Common myeloid progenitor, CD34-positive (primary cell): ENCODE measurements at regions of chr1 and their contacts with region 1.

Region 1: DNA sequence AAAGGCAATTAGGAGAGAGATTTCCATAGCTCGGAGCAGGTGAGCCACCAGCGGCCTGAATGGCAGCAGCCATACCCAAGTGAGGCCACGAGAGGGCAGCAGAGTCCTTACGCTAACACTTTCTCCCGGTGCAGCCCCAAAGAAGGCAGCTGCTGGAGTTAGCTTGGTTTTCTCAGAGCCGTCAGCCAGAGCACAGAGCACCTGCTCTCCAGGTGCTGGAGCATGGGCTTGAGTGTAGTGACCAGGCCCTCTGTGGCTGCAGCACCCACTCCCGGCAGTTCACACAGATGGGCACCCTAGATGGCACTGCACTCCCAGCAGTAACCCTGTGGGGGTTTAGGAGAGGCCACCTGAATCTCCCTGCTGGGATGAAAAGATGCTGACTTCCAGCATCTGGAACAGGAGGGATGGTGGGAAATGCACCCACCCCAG is 45.8 kb downstream of the TMCC2 start:
- DNase-seq: peak; percentile 71 to 86 (median 81)
- H3K4me3 ChIP-seq: no peak overlapping the region
- H3K27ac ChIP-seq: no peak overlapping the region
- H3K4me1 ChIP-seq: peaks cover 0 to 6% (median under 1%) of the 10 kb centered on the region in 4 experiments
- H3K27me3 ChIP-seq: peaks cover 0 to 11% (median 0%) of the 10 kb centered on the region in 5 experiments

Region 2: DNA sequence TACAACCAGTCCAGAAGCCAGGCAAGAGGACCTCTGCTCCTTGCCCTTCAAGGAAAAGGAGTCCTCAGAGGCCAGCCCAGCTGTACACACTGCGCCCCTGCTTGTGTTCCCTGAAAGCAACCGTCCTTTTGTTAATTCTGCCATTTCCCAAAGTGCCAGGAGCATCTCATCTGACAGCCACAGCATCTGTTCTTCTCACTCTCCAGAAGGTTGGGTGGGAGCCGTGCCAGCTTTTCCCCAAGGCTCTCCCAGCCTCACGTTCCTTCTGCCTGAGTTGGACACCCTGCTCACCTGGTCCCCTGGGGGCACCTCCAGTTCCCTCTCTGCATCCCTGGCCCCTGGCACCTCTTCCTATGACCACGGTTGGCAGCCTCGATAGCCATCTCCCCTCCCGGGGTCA is 241.1 kb before region 1 on chr1:
- CTCF ChIA-PET with region 1: no interaction called
- POLR2A ChIA-PET with region 1: no interaction called
- DNase-seq: no peak
- H3K4me3 ChIP-seq: no peak overlapping the region
- H3K27ac ChIP-seq: no peak overlapping the region
- H3K4me1 ChIP-seq: no peaks in the 10 kb centered on the region
- H3K27me3 ChIP-seq: peaks cover 0 to 11% (median 0%) of the 10 kb centered on the region in 5 experiments

Region 3: GRCh38 chr1:205237526-205238484 is 35.8 kb before region 1 on chr1:
- CTCF ChIA-PET with region 1: no interaction called
- POLR2A ChIA-PET with region 1: no interaction called
- DNase-seq: peak; percentile 56 to 86 (median 82)
- H3K4me3 ChIP-seq: peak overlapping the region in 4 of 7 experiments; percentile 2 to 55 (median 28)
- H3K27ac ChIP-seq: peak overlapping the region; percentile 10 to 63
- H3K4me1 ChIP-seq: peaks cover 13 to 37% (median 32%) of the 10 kb centered on the region in 4 experiments
- H3K27me3 ChIP-seq: no peaks in the 10 kb centered on the region

Region 4: DNA sequence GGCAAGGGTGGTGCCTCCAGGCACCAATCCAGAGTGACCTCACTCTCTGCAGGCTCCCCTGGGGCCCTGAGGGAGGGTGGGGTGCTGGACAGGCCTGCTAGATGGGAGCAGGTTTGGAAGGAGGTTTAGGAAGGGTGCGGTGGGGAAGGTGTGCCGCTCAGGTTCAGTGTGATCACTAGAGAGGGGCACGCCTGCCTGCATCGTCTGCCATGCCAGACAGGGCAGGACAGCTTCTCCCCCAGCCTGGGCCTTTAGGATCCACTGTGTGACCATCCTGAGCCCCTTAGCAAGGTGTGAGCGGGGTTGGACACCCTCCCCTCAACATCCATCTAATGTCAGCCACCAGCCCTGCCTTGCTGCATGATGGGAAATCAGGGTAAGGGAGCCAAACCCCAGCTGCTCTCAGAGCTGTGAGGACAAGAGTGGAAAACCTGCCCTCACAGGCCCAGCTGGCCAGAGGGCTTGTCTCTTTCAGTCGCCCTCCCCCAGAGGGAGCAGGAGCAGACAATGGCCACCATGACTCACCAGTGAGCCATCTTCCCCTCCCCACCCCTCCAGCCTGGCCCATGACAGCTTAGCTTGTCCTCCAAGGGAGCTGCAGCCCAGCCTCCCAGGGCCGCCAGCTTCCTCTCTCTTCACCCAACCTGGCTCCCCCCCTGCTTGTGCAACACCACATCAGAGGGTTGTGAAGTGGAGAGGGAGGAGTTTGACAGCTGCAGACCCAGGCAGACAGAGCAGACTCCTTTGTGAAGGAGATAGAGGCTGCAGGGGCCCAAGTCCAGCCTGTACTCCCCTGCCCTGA is 11.0 kb after region 1 on chr1:
- CTCF ChIA-PET with region 1: interaction called, 123 read pairs
- POLR2A ChIA-PET with region 1: interaction called, 4 read pairs
- DNase-seq: peak; percentile 78 to 94 (median 94)
- H3K4me3 ChIP-seq: peak overlapping the region in 2 of 7 experiments; percentile 13 to 22
- H3K27ac ChIP-seq: peak overlapping the region in 1 of 2 experiments; percentile 2
- H3K4me1 ChIP-seq: peaks cover 25 to 54% (median 52%) of the 10 kb centered on the region in 4 experiments
- H3K27me3 ChIP-seq: peaks cover 0 to 14% (median 0%) of the 10 kb centered on the region in 5 experiments

Region 5: DNA sequence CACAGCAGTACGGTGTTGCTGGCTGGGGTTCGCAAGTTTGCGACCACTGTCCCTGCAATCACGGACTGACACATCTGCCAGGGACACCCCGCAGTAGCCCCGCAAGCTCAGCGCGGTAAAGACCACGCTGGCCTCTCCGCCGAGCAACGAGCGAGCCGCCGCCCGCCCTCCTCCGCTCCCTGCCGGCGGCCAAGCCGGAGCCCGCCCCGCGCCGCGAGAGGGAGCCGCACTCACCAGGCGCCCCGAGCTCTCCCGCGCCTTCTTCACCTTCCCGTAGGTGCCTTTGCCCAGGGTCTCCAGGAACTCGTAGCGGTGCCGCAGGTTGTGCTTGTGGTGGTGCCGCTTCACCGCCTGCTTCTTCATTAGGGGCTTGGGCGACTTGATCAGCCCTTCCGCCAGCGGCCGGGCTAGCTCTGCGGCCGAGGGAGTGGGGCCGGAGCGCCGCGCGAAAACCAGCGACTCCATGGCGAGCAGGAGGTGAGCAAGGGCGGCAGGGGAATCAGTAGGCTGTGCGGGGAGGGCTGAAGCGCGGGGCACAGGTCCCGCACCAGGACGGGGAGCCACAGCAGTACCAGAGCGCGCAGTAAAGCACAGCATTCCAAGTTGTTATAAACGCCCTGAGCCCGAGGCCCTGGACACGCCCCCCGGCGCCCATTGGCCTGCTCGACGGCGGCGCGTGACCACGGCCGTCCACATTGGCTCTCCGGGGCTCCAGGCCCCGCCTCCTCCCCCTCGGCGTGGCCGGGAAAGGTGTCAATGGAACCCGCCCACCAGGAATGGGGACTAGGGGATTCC is 47.8 kb after region 1 on chr1 and contains the start of gene NUAK2:
- CTCF ChIA-PET with region 1: interaction called, 1,168 read pairs
- POLR2A ChIA-PET with region 1: interaction called, 4 read pairs
- DNase-seq: peak; percentile 56 to 76 (median 62)
- H3K4me3 ChIP-seq: peak within 1 kb of the TSS; percentile 10 to 92 (median 81)
- H3K27ac ChIP-seq: peak within 1 kb of the TSS in 1 of 2 experiments; percentile 40
- H3K4me1 ChIP-seq: peaks cover 16 to 55% (median 37%) of the 10 kb centered on the region in 4 experiments
- H3K27me3 ChIP-seq: peaks cover 0 to 37% (median 0%) of the 10 kb centered on the region in 5 experiments